SK-N-SH (cell line): ENCODE measurements at regions of chr20 and their contacts with region 1.

Region 1: GRCh38 chr20:15643714-15644113 is 929.5 kb downstream of the KIF16B start:
- DNase-seq: no peak
- H3K4me3 ChIP-seq: no peak overlapping the region
- H3K27ac ChIP-seq: no peak overlapping the region
- H3K4me1 ChIP-seq: no peaks in the 10 kb centered on the region
- H3K27me3 ChIP-seq: no peaks in the 10 kb centered on the region
- CTCF ChIP-seq: peak; percentile 50
- EP300 ChIP-seq: no peak
- RAD21 ChIP-seq: peak; percentile 38

Region 2: DNA sequence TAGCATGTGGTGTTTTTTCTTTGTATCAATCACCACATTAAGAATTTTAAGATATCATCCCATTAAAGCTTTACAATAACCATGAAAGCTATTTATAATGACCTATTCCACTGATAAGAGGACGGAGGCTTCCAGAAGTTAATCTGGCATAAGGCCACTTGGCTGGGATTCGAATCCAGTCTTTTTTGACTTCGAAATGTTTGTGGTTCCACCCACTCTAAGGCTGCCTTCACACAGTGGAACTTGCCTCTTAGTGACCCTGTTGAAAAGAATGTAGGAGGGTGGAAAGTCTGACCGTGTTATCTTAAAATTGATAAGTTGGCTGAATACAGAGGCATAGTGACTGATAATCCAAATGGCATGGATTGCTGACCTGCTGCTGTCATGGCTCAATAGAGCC is 30.2 kb before region 1 on chr20:
- CTCF ChIA-PET with region 1: no interaction called
- POLR2A ChIA-PET with region 1: no interaction called
- DNase-seq: no peak
- H3K4me3 ChIP-seq: no peak overlapping the region
- H3K27ac ChIP-seq: peak overlapping the region in 1 of 2 experiments; percentile 55; a peak in 1 of 4 replicates
- H3K4me1 ChIP-seq: peaks cover 0 to 14% of the 10 kb centered on the region in 2 experiments; a peak in 2 of 4 replicates
- H3K27me3 ChIP-seq: no peaks in the 10 kb centered on the region
- CTCF ChIP-seq: no peak
- EP300 ChIP-seq: no peak
- RAD21 ChIP-seq: no peak

Region 3: DNA sequence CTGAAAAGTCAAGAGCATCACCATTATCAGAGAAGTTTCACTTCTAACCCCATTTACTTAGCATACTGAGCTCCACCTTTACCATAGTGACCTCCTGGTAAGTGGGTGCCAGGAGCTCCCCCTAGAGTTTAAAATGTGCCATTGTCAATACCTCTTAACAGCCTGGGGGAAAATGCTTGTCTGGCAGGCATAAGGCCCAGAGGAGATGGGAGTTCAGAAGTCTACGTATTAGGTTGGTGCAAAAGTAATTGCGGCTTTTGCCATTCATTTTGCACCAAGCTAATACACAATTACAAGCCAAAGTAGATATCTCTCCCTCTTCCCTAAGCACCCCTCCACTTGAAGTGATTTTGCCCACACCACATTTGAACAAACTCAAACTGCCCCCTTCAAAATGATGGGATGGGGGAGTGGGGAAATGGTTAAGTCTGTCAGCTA is 10.5 kb after region 1 on chr20:
- CTCF ChIA-PET with region 1: interaction called, 11 read pairs
- POLR2A ChIA-PET with region 1: no interaction called
- DNase-seq: peak; percentile 24
- H3K4me3 ChIP-seq: no peak overlapping the region
- H3K27ac ChIP-seq: no peak overlapping the region
- H3K4me1 ChIP-seq: peaks cover 0 to 2% of the 10 kb centered on the region in 2 experiments; a peak in 2 of 4 replicates
- H3K27me3 ChIP-seq: no peaks in the 10 kb centered on the region
- CTCF ChIP-seq: peak; percentile 68
- EP300 ChIP-seq: no peak
- RAD21 ChIP-seq: peak; percentile 66